Heart right ventricle (tissue), 16 donors: ENCODE measurements at regions of chr7 and their contacts with region 1.

Region 1: DNA sequence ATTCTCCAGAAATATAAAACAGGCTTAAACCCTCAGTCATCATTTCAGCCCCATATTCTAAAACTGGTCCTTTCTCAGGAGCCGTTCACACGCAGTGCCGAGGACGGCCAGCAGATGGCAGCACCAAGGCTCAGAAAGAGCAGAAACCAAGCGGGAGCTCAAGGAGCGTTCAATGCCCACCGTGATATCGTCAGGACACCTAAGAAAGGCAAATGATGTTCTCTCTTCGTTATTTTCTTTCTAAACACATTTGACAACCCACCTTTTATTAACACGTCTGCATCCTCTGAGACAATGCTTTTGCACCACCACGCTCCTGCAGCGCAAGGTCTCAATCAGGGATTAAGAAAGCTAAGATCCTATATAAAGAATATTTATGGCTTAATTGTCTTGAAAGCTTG is 45.7 kb upstream of the RBM33 start:
- DNase-seq: peak; percentile 73 to 82
- ATAC-seq: peak in 6 of 8 donors; percentile 55 to 82 (median 74)
- H3K4me3 ChIP-seq: no peak overlapping the region
- H3K27ac ChIP-seq: no peak overlapping the region
- H3K4me1 ChIP-seq: peaks cover 0 to 5% (median 0%) of the 10 kb centered on the region in 9 donors
- H3K27me3 ChIP-seq: peaks cover 0 to 52% (median 26%) of the 10 kb centered on the region in 7 donors
- CTCF ChIP-seq: peak; percentile 92 to 99 (median 98)

Region 2: DNA sequence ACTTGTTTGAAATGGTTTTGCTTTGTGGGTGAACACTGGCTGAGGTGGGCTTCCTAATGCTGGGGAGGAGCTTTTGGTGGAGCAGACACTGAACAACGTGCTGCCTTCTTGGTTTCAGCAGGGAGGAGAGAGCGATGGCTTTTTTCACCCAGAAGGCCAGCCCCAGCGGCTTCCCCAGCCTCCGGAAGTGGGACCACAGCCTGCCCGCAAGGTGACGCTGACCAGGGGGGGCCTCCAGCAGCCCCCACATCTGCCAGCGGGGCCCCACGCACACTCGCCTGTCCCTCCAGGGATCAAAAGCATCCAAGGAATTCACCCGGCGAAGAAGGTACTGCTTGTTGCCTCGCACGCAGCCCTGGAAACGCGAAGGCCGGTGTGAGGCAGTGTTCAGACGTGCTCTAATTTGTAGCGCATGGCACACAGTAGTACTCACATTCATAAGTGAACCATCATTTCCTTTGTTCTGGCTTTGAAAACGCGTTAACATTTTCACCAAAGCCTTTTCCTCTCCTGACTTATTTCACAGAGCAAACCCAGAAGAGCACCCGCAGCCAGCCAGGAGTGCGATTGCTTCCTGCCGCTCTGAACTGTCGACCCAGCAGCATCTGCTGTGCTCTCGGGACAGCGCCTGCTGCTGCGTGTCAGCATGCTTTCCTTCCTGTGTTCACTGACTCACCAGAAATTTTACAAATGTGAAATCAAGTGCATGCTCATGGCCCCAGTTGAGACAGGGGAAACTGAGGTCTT is 165.1 kb after region 1 on chr7:
- intact Hi-C with region 1: loop called in 8 of 10 experiments (anchors 1 to 10 kb)
- DNase-seq: peak in 1 of 2 donors; percentile 19
- ATAC-seq: peak in 7 of 8 donors; percentile 53 to 76 (median 60)
- H3K4me3 ChIP-seq: peak overlapping the region in 2 of 10 donors; percentile 11 to 18
- H3K27ac ChIP-seq: peak overlapping the region in 9 of 10 donors; percentile 29 to 90 (median 68)
- H3K4me1 ChIP-seq: peaks cover 5 to 60% (median 35%) of the 10 kb centered on the region in 9 donors
- H3K27me3 ChIP-seq: no peaks in the 10 kb centered on the region
- CTCF ChIP-seq: no peak

Region 3: GRCh38 chr7:155769701-155770100 is 170.9 kb after region 1 on chr7:
- intact Hi-C with region 1: loop called in 8 of 10 experiments (anchors 1 to 10 kb)
- DNase-seq: no peak
- ATAC-seq: peak in 3 of 8 donors; percentile 45 to 66 (median 57)
- H3K4me3 ChIP-seq: no peak overlapping the region
- H3K27ac ChIP-seq: peak overlapping the region in 4 of 10 donors; percentile 4 to 77 (median 28)
- H3K4me1 ChIP-seq: peaks cover 0 to 17% (median 1%) of the 10 kb centered on the region in 9 donors
- H3K27me3 ChIP-seq: no peaks in the 10 kb centered on the region
- CTCF ChIP-seq: no peak